ENCODE measurements at regions of chr16 and their contacts with region 1.

Region 1: GRCh38 chr16:54890381-54890780 is 40.3 kb upstream of the IRX5 start:
- DNase-seq: no peak
- H3K4me3 ChIP-seq: no peak overlapping the region
- H3K27ac ChIP-seq: no peak overlapping the region
- H3K4me1 ChIP-seq: no peaks in the 10 kb centered on the region
- H3K27me3 ChIP-seq: no peaks in the 10 kb centered on the region
- CTCF ChIP-seq: no peak
- POLR2A ChIP-seq: no peak

Region 2: DNA sequence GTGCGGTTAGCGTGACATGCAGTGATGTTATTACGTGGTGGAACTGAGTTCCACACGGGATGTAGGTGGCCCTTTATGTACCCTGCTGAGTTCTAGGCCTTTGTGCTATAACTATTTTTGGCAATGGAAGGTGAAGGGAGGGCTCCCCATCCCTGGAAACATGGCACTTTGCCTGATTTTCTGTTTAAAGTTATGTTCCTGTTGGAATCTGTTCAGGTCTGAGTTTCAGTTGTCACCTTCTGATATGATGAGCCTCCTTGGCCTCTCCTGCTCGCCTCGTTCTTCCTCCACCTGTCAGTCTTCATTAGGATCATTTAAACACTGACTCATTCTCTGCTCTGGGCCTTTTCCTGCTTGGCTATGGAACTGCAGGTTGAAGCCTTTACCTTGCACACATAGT is 985.8 kb before region 1 on chr16:
- intact Hi-C with region 1: loop called (anchors 10 kb)
- DNase-seq: no peak
- H3K4me3 ChIP-seq: no peak overlapping the region
- H3K27ac ChIP-seq: no peak overlapping the region
- H3K4me1 ChIP-seq: peaks cover 5% of the 10 kb centered on the region
- H3K27me3 ChIP-seq: no peaks in the 10 kb centered on the region
- CTCF ChIP-seq: no peak
- POLR2A ChIP-seq: no peak

Region 3: GRCh38 chr16:54568906-54569807 is 321.2 kb before region 1 on chr16:
- intact Hi-C with region 1: no loop called
- DNase-seq: no peak
- H3K4me3 ChIP-seq: no peak overlapping the region
- H3K27ac ChIP-seq: no peak overlapping the region
- H3K4me1 ChIP-seq: peaks cover 6% of the 10 kb centered on the region
- H3K27me3 ChIP-seq: no peaks in the 10 kb centered on the region
- CTCF ChIP-seq: no peak
- POLR2A ChIP-seq: no peak